PC-3 (cell line): ENCODE measurements at regions of chr7 and their contacts with region 1.

Region 1: GRCh38 chr7:123797673-123798527 is 47.1 kb upstream of the HYAL4 start:
- DNase-seq: peak; percentile 94
- ATAC-seq: peak; percentile 89
- H3K4me3 ChIP-seq: peak overlapping the region; percentile 35; the same call in 1 of the 2 replicates
- H3K27ac ChIP-seq: 0 out of 2 replicates have a peak overlapping the region, but pooled peaks have one; percentile 8
- H3K4me1 ChIP-seq: peaks cover 19% of the 10 kb centered on the region
- H3K27me3 ChIP-seq: no peaks in the 10 kb centered on the region
- CTCF ChIP-seq: peak; percentile 84

Region 2: GRCh38 chr7:123635551-123636359 is 162.1 kb before region 1 on chr7:
- CTCF ChIA-PET with region 1: interaction called, 7 read pairs
- POLR2A ChIA-PET with region 1: no interaction called
- intact Hi-C with region 1: loop called (anchors 1 kb)
- DNase-seq: peak; percentile 55
- ATAC-seq: peak; percentile 60
- H3K4me3 ChIP-seq: no peak overlapping the region
- H3K27ac ChIP-seq: no peak overlapping the region
- H3K4me1 ChIP-seq: peaks cover 15% of the 10 kb centered on the region
- H3K27me3 ChIP-seq: no peaks in the 10 kb centered on the region
- CTCF ChIP-seq: peak; percentile 76

Region 3: DNA sequence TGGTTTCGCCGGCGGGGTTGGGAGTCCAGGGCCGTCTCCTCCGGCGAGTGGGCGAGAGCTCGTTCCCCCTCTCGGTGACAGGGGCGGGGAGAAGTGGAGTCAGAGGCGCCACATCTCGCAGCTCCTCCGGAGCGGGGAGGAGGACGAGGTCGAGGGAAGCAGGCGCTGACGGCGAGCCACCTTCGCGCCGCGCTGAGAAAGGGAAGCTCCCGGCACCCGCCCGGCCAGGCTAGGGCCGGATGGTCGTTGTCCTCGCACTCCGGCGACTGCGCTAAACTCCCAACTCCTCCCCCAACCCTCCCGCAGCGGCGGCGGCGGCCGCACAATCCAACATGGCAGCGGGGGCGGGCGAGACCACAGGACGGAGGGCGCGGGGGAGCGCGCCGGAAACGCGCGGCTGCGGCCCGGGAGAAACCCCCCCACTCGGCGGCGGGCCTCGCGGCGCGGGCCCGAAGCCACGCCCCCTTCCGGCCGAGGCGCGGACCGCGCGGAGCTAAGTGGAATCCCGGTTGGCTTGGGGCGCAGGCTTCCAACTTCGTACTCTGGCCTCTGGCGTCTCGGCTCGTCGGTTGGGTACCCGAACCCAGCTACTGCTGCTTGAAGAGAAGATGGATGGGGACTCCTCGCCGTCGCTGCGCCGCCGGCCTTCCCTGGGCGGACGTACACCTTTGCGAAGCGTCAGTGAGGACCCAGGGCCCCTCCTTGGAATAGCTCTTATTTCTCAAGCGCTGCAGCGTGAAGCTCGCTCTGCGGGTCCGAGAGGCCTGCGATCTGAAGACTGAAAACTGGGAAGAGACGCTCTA is 49.0 kb before region 1 on chr7 and contains the start of gene WASL:
- CTCF ChIA-PET with region 1: interaction called, 10 read pairs
- POLR2A ChIA-PET with region 1: interaction called, 8 read pairs
- intact Hi-C with region 1: loop called (anchors 1 kb)
- DNase-seq: peak; percentile 89
- ATAC-seq: peak; percentile 77
- H3K4me3 ChIP-seq: peak within 1 kb of the TSS; percentile 98
- H3K27ac ChIP-seq: peak within 1 kb of the TSS; percentile 87
- H3K4me1 ChIP-seq: peaks cover 29% of the 10 kb centered on the region
- H3K27me3 ChIP-seq: no peaks in the 10 kb centered on the region
- CTCF ChIP-seq: no peak
- total RNA-seq, gene WASL: 8.5 and 10.9 TPM in 2 replicates

Region 4: DNA sequence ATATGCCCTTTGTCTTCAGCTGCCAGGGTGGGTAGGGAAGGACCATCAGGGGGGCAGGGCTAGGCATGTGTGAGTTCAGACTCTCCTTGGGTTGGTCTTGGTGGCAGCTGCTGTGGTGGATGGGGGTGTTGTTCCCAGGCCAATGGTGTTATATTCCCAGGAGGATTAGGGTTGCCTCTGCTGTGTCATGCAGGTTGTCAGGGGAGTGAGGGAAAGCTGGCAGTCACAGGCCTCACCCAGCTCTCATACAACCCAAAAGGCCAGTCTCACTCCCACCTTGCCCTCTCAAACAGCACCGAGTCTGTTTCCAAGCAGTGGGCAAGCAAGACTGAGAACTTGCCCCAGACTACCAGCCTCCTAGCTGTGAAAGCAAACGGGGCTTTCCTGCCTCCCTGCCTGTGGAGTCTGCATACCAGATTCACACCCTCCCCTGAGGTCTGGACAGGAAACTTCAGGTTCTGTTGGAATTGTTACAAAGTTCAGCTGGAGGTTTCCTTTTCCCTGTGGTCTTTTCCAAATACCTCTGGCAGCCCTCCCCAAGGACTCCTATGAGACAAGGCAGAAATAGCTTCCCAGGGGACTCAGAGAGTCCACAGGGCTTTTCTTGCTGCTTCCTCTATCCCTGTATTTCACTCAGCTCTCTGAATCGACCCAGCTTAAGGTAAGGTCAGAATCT is 48.5 kb after region 1 on chr7:
- CTCF ChIA-PET with region 1: interaction called, 11 read pairs
- POLR2A ChIA-PET with region 1: no interaction called
- intact Hi-C with region 1: loop called (anchors 1 kb)
- DNase-seq: peak; percentile 84
- ATAC-seq: peak; percentile 79
- H3K4me3 ChIP-seq: no peak overlapping the region
- H3K27ac ChIP-seq: peak overlapping the region; percentile 76
- H3K4me1 ChIP-seq: peaks cover 51% of the 10 kb centered on the region
- H3K27me3 ChIP-seq: no peaks in the 10 kb centered on the region
- CTCF ChIP-seq: no peak

Region 5: DNA sequence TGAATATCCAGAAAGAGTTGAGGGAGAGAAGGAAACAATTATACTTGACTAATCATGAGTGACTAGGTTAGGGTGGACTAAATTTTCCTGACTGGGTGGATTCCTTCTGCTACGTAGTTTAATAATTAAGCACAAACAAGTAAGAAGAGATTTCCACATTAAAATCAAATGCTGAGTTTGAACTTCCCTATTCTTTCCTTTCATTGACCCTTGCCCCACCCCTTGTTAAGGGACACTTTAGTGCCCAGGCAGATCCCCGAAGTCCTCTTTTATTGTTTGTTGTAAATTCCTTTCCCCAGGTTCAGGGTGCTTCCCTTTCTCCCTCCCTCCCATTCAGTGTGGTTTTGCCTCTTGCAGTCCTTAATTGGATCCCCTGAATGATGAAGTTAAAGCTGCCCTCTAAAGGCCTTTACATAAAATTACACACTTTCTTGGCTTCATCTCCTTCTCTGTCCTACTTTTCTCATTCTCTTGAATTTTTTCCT is 118.4 kb after region 1 on chr7:
- CTCF ChIA-PET with region 1: no interaction called
- POLR2A ChIA-PET with region 1: no interaction called
- intact Hi-C with region 1: loop called (anchors 1 kb)
- DNase-seq: peak; percentile 51
- ATAC-seq: peak; percentile 80
- H3K4me3 ChIP-seq: no peak overlapping the region
- H3K27ac ChIP-seq: no peak overlapping the region
- H3K4me1 ChIP-seq: no peaks in the 10 kb centered on the region
- H3K27me3 ChIP-seq: no peaks in the 10 kb centered on the region
- CTCF ChIP-seq: peak; percentile 65